Right ventricle myocardium superior (tissue), 1 donor: ENCODE measurements at regions of chr20 and their contacts with region 1.

Region 1: GRCh38 chr20:20360464-20360863 is 7.4 kb upstream of the INSM1 start:
- DNase-seq: no peak
- ATAC-seq: peak; percentile 91

Region 2: DNA sequence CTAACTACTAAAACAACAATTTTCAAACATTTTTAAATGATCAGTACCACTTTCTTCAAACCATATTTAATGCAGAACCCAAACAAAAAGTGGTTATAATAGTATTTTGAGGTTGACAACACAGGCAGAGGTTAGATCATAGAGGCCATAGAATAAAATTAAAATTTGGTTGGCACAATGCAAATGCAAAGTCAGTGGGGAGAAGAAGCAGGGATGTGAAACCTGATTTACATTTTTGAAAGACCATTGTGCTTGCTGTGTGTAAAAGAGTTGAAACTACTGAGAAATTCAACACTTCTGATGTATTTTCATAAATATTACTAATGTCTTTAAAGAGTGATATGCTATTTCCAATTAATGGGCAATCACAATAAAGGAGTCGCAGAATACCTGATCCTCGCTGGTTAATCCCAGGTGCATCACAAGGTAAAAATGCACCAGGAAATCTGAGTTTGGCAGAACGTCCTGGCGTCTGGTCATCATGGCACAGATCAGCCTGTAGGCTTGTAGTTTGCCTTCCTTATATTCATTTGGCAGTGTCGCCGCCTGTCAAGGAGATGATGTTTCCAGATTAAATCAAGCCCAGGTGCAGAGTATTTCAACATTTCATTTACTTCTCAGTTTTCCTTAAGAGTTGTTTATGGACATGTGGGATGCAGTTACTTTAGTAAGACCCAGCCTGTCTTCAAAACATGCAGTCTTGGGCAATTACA is 210.8 kb after region 1 on chr20:
- intact Hi-C with region 1: loop called (anchors 10 kb)
- DNase-seq: no peak
- ATAC-seq: no peak

Region 3: GRCh38 chr20:20699144-20699543 is 338.7 kb after region 1 on chr20:
- intact Hi-C with region 1: no loop called
- DNase-seq: no peak
- ATAC-seq: no peak